ENCODE measurements at regions of chr12 and their contacts with region 1.

Region 1: GRCh38 chr12:114476159-114476558 is 70.2 kb upstream of the TBX5 start:
- DNase-seq: no peak
- ATAC-seq: peak; percentile 72
- H3K4me3 ChIP-seq: no peak overlapping the region
- H3K27ac ChIP-seq: no peak overlapping the region
- H3K4me1 ChIP-seq: peaks cover 7% of the 10 kb centered on the region
- H3K27me3 ChIP-seq: peaks cover 45% of the 10 kb centered on the region
- CTCF ChIP-seq: peak; percentile 56

Region 2: GRCh38 chr12:114123108-114123507 is 353.1 kb before region 1 on chr12:
- CTCF ChIA-PET with region 1: interaction called, 15 read pairs
- POLR2A ChIA-PET with region 1: no interaction called
- in situ Hi-C with region 1: no loop called
- intact Hi-C with region 1: no loop called
- DNase-seq: no peak
- ATAC-seq: no peak
- H3K4me3 ChIP-seq: no peak overlapping the region
- H3K27ac ChIP-seq: no peak overlapping the region
- H3K4me1 ChIP-seq: no peaks in the 10 kb centered on the region
- H3K27me3 ChIP-seq: no peaks in the 10 kb centered on the region
- CTCF ChIP-seq: no peak

Region 3: GRCh38 chr12:114166362-114166761 is 309.8 kb before region 1 on chr12:
- CTCF ChIA-PET with region 1: no interaction called
- POLR2A ChIA-PET with region 1: no interaction called
- in situ Hi-C with region 1: no loop called
- intact Hi-C with region 1: loop called (anchors 5 kb)
- DNase-seq: no peak
- ATAC-seq: 0 out of 2 replicates have a peak, but pooled peaks have one; percentile 51
- H3K4me3 ChIP-seq: no peak overlapping the region
- H3K27ac ChIP-seq: no peak overlapping the region
- H3K4me1 ChIP-seq: no peaks in the 10 kb centered on the region
- H3K27me3 ChIP-seq: peaks cover 6% of the 10 kb centered on the region
- CTCF ChIP-seq: peak; percentile 66